Activated B cell treated with CpG ODN at 0.5 μM for 24 hours (primary cell): ENCODE measurements at regions of chr19 and their contacts with region 1.

Region 1: GRCh38 chr19:49331616-49332055 is 3.6 kb upstream of the CD37 start:
- DNase-seq: no peak
- ATAC-seq: peak; percentile 44
- H3K4me3 Mint-ChIP-seq: peak overlapping the region; percentile 73
- H3K27ac Mint-ChIP-seq: peak overlapping the region; percentile 100
- H3K4me1 Mint-ChIP-seq: peaks cover 95% of the 10 kb centered on the region
- H3K27me3 Mint-ChIP-seq: no peaks in the 10 kb centered on the region
- CTCF ChIP-seq: no peak

Region 2: DNA sequence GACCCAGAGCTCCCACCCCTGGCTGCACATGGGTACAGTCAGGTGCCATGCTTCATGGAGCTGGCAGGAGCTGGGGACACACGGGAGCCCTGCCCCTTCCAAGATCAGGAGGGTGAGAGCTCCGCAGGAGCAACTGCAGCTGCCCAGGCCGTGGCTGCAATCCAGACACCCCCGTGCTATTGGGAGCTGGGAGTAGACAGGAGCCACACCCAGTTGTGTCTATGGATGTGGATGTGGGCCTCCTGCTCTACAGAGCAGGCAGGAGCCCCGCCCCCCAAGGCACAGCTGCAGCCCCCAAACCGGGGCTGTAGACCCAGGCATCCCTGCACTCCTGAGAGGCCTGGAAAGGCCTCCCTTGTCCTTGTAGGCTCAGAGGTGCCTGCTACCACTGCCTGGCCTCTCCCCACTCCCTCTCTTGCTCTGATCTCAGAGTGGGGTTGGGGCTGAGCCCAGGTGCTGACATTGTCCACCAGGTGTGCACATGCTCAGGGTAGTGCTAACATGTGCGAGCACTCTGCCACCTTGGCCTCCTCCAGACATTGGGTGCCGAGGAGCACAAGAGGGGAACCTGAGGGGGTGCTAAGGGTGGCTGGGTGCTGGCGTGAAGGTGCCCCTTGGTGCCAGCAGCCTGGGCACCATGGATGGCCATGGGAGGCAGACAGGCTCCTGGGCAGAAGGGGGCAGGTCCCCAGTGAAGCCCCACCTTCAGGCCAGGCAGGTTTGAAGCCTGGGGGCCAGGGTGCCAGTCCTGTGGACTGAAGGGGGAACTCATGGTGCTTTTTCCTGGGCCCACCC is 385.0 kb before region 1 on chr19:
- CTCF ChIA-PET with region 1: no interaction called
- POLR2A ChIA-PET with region 1: no interaction called
- intact Hi-C with region 1: no loop called
- DNase-seq: no peak
- ATAC-seq: no peak
- H3K4me3 Mint-ChIP-seq: no peak overlapping the region
- H3K27ac Mint-ChIP-seq: no peak overlapping the region
- H3K4me1 Mint-ChIP-seq: no peaks in the 10 kb centered on the region
- H3K27me3 Mint-ChIP-seq: no peaks in the 10 kb centered on the region
- CTCF ChIP-seq: no peak

Region 3: DNA sequence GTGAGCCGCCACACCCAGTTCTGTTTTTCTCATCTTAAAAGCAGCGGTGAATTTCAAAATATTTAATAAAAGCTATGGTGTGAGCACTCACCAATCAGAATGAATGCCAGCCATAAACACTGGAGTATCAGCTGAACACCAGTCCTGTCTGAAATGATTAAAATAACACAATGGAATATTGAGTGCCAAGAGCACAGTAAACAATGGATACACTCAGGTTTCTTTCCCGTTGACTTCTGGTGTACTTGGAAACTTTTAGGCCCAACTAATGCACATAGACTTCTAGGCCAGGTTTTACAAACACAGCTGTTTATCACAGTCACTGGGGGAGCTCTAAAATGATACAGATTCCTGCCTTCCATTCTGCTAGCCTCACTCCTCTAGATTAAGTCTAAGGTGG is 74.9 kb before region 1 on chr19:
- CTCF ChIA-PET with region 1: no interaction called
- POLR2A ChIA-PET with region 1: no interaction called
- intact Hi-C with region 1: no loop called
- DNase-seq: no peak
- ATAC-seq: no peak
- H3K4me3 Mint-ChIP-seq: no peak overlapping the region
- H3K27ac Mint-ChIP-seq: no peak overlapping the region
- H3K4me1 Mint-ChIP-seq: no peaks in the 10 kb centered on the region
- H3K27me3 Mint-ChIP-seq: peaks cover 40% of the 10 kb centered on the region
- CTCF ChIP-seq: no peak

Region 4: DNA sequence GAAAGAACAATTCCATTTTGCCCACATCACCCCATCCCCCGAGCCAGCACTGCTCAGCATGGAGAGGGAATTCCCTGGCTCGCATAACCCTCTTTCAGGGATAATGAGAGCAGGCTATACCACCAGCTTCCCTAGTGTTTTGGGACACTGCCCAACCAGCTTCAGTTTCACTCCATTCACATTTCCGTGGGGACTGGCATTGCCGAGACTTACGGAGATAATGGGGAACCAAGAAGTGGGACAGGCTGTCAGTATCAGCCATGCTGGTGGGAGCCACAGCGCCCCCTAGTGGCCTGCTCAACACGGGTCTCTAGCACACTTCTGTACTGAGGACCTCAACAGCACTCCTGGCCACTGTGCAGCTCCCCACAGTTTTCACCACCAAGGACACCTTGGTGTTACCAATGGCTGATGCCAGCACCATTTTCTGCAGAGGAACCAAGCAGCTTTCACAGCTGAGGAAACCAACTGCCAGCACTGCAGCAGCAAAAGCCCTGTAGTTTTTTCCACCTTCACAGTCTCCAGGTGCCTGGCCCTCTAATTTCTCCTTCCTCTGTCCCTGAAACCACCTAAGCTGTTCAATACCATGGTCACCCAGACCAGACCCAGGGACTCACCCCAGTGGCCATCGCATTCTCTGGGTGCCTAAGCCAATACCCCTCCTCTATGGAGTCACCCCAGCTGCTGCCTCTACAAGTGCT is 30.3 kb before region 1 on chr19:
- CTCF ChIA-PET with region 1: interaction called, 24 read pairs
- POLR2A ChIA-PET with region 1: interaction called, 36 read pairs
- intact Hi-C with region 1: loop called (anchors 1 kb)
- DNase-seq: peak; percentile 81
- ATAC-seq: peak; percentile 99
- H3K4me3 Mint-ChIP-seq: peak overlapping the region; percentile 64
- H3K27ac Mint-ChIP-seq: peak overlapping the region; percentile 7
- H3K4me1 Mint-ChIP-seq: peaks cover 21% of the 10 kb centered on the region
- H3K27me3 Mint-ChIP-seq: no peaks in the 10 kb centered on the region
- CTCF ChIP-seq: no peak

Region 5: DNA sequence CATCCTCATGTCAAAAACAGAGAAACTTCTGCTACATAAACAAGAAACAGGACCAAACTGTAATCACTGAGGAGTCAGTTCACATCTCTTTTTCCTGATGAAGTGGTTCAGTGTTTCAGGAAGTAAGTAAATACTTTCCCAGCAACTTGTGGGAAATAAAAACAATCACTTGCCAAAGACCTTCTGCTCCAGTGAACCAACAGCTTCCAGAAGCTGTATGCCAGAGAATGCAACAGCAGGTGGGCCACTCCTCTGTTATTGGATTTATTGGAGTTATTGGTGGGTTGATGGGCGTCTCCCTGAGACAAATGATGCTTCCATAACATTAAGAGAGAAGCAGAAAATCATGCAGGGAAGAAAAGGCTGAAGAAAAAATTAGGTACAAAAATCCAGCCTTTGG is 16.5 kb before region 1 on chr19:
- CTCF ChIA-PET with region 1: interaction called, 4 read pairs
- POLR2A ChIA-PET with region 1: interaction called, 757 read pairs
- intact Hi-C with region 1: no loop called
- DNase-seq: no peak
- ATAC-seq: no peak
- H3K4me3 Mint-ChIP-seq: no peak overlapping the region
- H3K27ac Mint-ChIP-seq: peak overlapping the region; percentile 4
- H3K4me1 Mint-ChIP-seq: peaks cover 48% of the 10 kb centered on the region
- H3K27me3 Mint-ChIP-seq: no peaks in the 10 kb centered on the region
- CTCF ChIP-seq: no peak

Region 6: GRCh38 chr19:49363268-49364082 is 31.8 kb after region 1 on chr19 and contains the start of gene DKKL1:
- CTCF ChIA-PET with region 1: no interaction called
- POLR2A ChIA-PET with region 1: interaction called, 73 read pairs
- intact Hi-C with region 1: loop called (anchors 1 kb)
- DNase-seq: peak; percentile 94
- ATAC-seq: peak; percentile 85
- H3K4me3 Mint-ChIP-seq: peak within 1 kb of the TSS; percentile 29
- H3K27ac Mint-ChIP-seq: no peak within 1 kb of the TSS
- H3K4me1 Mint-ChIP-seq: peaks cover 31% of the 10 kb centered on the region
- H3K27me3 Mint-ChIP-seq: no peaks in the 10 kb centered on the region
- CTCF ChIP-seq: no peak
- total RNA-seq, gene DKKL1: 0.71 and 0.76 TPM in 2 replicates

Region 7: DNA sequence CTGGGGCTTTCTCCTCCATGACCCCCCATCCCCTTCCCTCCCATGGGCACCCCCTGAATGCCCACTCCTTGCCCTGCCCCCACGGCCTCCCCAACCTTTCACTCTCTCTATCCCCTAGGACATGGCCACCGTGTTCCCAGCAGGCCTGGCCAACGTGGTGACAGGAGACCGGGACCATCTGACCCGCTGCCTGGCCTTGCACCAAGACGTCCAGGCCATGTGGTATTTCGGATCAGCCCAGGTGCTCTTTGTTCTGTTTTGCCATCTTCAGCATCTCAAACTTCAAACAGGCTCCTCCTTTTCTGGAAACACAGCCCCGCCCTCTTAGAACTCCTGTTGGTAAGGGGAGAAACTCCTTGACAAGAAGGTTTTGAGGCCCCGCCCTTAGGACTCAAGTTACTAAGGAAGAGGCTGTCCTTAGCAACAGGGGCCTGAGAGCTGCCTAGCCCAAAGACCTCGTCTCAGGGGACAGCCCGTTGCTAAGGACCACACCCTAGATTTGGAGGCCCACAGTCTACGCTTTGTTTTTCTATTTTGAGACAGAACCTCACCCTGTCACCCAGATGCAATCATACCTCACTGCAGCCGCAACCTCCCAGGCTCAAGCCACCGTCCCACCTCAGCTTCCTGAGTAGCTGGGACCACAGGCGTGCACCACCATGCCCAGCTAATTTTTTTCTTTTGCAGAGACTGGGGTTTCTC is 137.3 kb after region 1 on chr19:
- CTCF ChIA-PET with region 1: no interaction called
- POLR2A ChIA-PET with region 1: interaction called, 45 read pairs
- intact Hi-C with region 1: loop called (anchors 2 kb)
- DNase-seq: peak; percentile 72
- ATAC-seq: peak; percentile 76
- H3K4me3 Mint-ChIP-seq: peak overlapping the region; percentile 61
- H3K27ac Mint-ChIP-seq: peak overlapping the region; percentile 97
- H3K4me1 Mint-ChIP-seq: peaks cover 46% of the 10 kb centered on the region
- H3K27me3 Mint-ChIP-seq: no peaks in the 10 kb centered on the region
- CTCF ChIP-seq: no peak

Region 8: GRCh38 chr19:49512970-49513745 is 181.5 kb after region 1 on chr19:
- CTCF ChIA-PET with region 1: no interaction called
- POLR2A ChIA-PET with region 1: no interaction called
- intact Hi-C with region 1: no loop called
- DNase-seq: peak; percentile 53
- ATAC-seq: peak; percentile 81
- H3K4me3 Mint-ChIP-seq: peak overlapping the region; percentile 85
- H3K27ac Mint-ChIP-seq: peak overlapping the region; percentile 85
- H3K4me1 Mint-ChIP-seq: peaks cover 36% of the 10 kb centered on the region
- H3K27me3 Mint-ChIP-seq: no peaks in the 10 kb centered on the region
- CTCF ChIP-seq: no peak

Region 9: DNA sequence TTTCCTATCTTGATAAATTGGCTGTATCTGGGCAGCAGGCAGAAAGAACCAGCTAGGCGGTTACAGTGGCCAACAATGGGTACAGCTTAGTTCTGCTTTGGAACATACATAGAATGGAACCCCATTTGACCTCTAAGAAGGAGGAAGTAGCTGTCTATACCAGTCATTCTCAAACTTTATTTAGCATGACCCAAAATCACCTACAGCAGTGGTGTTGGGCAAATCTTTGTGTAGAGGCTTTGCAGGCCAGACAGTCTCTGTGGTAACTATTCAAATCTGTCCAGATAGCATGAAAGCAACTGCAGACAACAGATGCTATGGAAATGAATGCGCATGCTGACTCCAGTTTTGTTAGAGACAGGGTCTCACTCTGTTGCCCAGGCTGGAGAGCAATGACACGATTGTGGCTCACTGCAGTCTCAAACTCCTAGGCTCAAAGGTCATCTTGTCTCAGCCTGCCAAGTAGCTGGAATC is 1009.5 kb after region 1 on chr19:
- CTCF ChIA-PET with region 1: no interaction called
- POLR2A ChIA-PET with region 1: no interaction called
- intact Hi-C with region 1: loop called (anchors 10 kb)
- DNase-seq: no peak
- ATAC-seq: peak; percentile 65
- H3K4me3 Mint-ChIP-seq: peak overlapping the region; percentile 81
- H3K27ac Mint-ChIP-seq: peak overlapping the region; percentile 92
- H3K4me1 Mint-ChIP-seq: peaks cover 81% of the 10 kb centered on the region
- H3K27me3 Mint-ChIP-seq: no peaks in the 10 kb centered on the region
- CTCF ChIP-seq: no peak